ENCODE measurements at regions of chr3 and their contacts with region 1.

Region 1: DNA sequence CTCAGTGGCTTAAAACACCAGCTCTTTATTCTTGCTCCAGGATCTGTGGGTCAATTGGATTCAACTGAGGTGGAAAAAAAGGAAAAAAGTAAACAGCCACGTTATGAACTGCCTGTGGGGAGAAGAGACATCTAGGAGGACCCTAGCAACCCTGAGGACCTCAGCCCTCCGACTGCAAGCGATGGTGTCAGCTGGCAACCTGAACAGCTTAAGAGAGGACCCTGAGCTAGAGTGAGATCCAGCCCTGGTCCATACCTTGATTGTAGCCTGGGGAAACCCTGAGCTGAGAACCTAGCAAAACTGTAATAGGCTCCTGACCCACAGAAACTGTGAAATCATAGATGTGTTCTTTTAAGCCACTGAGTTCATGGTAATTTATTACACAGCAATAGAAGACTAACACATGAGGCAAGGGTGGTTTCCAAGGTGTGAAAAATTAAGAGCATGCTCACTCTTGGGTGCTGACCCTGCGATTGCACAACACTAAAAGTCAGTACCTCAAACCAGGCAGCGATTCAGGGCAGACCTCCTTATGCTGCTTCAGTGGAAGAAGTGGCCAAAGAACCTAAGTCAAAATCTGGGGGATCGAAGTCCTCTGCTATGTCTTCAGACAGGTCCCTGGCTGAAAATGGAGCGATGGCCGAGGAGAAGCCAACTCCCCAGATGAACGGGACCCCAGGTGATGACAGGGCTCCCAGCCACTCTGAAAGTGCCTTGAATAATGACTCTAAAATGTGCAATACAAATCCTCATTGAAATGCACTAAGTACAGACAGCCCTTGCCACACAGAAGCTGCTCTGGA is 57.7 kb downstream of the GASK1A start:
- DNase-seq: peak in 4 of 9 experiments; percentile 32 to 73 (median 58)
- ATAC-seq: peak; percentile 46
- H3K4me3 ChIP-seq: no peak overlapping the region
- H3K4me3 Mint-ChIP-seq: no peak overlapping the region
- H3K27ac ChIP-seq: peak overlapping the region in 1 of 2 experiments; percentile 9
- H3K27ac Mint-ChIP-seq: no peak overlapping the region
- H3K4me1 ChIP-seq: no peaks in the 10 kb centered on the region
- H3K4me1 Mint-ChIP-seq: peaks cover 26% of the 10 kb centered on the region
- H3K27me3 ChIP-seq: no peaks in the 10 kb centered on the region
- H3K27me3 Mint-ChIP-seq: no peaks in the 10 kb centered on the region
- CTCF ChIP-seq: no peak

Region 2: GRCh38 chr3:42991341-42992315 is 45.2 kb before region 1 on chr3:
- CTCF ChIA-PET with region 1: no interaction called
- POLR2A ChIA-PET with region 1: no interaction called
- intact Hi-C with region 1: loop called in 1 of 2 experiments (anchors 1 kb)
- DNase-seq: no peak
- ATAC-seq: no peak
- H3K4me3 ChIP-seq: no peak overlapping the region
- H3K4me3 Mint-ChIP-seq: no peak overlapping the region
- H3K27ac ChIP-seq: no peak overlapping the region
- H3K27ac Mint-ChIP-seq: no peak overlapping the region
- H3K4me1 ChIP-seq: no peaks in the 10 kb centered on the region
- H3K4me1 Mint-ChIP-seq: no peaks in the 10 kb centered on the region
- H3K27me3 ChIP-seq: no peaks in the 10 kb centered on the region
- H3K27me3 Mint-ChIP-seq: no peaks in the 10 kb centered on the region
- CTCF ChIP-seq: no peak